Left colon (tissue), 2 donors: ENCODE measurements at regions of chr3 and their contacts with region 1.

Region 1: DNA sequence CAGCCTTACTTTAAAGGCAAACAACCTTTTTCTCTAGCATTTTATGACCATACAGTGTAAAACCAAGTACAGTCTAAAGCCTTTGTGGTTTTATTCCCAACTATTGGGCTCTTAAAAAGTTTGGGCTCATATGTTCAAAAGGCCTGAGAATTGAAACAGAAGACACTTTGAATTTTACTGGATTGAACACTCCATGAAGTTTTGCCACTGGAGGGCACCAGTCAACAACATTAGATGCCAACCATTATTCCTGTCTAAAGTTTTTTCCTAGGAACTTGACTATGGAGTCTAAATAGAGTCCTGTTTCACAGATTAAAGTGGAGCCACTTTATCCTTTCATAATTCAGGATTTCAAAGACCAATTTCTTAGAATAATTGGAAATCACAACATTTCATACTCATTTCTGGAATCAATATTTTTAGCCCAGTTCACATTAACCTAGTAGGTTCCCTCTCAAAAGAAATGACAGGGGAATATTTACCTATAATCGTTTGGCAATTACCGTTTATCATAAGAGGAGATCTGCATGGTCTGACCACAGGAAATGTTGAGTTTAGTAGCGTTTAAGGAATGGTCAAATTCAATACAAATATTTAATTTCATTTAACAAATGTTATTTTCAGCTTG is 244.1 kb upstream of the PDZRN3 start:
- DNase-seq: peak in 1 of 2 donors; percentile 46
- ATAC-seq: peak; percentile 55

Region 2: DNA sequence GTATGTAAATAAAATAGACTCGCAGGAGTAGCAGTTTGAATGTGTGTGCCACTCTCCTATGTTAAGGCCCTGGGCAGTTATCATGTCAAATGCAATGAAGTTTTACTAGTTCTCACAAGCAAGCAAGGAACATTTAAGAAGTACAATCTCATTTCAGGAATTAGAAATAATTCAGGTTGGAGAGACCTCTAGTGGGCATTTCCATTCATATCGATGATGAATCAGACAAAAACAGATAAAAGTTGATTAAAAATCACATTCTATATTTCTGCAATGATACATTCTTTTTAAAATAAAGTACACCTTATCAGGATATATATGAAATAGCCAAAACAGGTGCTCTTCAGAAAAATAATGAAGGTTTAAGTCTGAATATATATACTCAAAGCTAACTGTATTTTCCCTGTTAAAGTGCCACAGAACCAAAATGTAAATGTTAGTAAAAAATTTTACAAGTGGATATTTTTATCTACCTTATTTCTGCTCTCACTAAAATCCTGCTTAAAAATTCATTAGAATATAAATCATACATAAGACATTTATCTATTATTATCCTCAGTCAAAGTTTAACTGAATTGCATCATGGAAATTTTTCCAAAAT is 1302.9 kb after region 1 on chr3:
- intact Hi-C with region 1: loop called in 1 of 2 experiments (anchors 5 kb)
- DNase-seq: no peak
- ATAC-seq: no peak